ENCODE measurements at regions of chr1 and their contacts with region 1.

Region 1: GRCh38 chr1:26321315-26322041 is 3.7 kb downstream of the CD52 start:
- DNase-seq: peak; percentile 85 to 94 (median 90)
- H3K4me3 ChIP-seq: peak overlapping the region; percentile 93
- H3K4me3 Mint-ChIP-seq: peak overlapping the region; percentile 75 to 99 (median 91)
- H3K27ac ChIP-seq: no peak overlapping the region
- H3K27ac Mint-ChIP-seq: peak overlapping the region; percentile 41 to 100 (median 95)
- H3K4me1 ChIP-seq: peaks cover 46% of the 10 kb centered on the region
- H3K4me1 Mint-ChIP-seq: peaks cover 47 to 63% (median 53%) of the 10 kb centered on the region in 3 donors
- H3K27me3 ChIP-seq: no peaks in the 10 kb centered on the region
- H3K27me3 Mint-ChIP-seq: peaks cover 0 to 2% of the 10 kb centered on the region in 2 donors

Region 2: GRCh38 chr1:26169669-26170471 is 151.6 kb before region 1 on chr1 and contains the start of gene ZNF593:
- CTCF ChIA-PET with region 1: interaction called, 12 read pairs
- POLR2A ChIA-PET with region 1: no interaction called
- DNase-seq: peak; percentile 71 to 88 (median 81)
- H3K4me3 ChIP-seq: peak within 1 kb of the TSS; percentile 68
- H3K4me3 Mint-ChIP-seq: peak within 1 kb of the TSS; percentile 86 to 95 (median 88)
- H3K27ac ChIP-seq: peak within 1 kb of the TSS; percentile 86
- H3K27ac Mint-ChIP-seq: peak within 1 kb of the TSS; percentile 39 to 97 (median 85)
- H3K4me1 ChIP-seq: peaks cover 17% of the 10 kb centered on the region
- H3K4me1 Mint-ChIP-seq: peaks cover 12 to 25% (median 22%) of the 10 kb centered on the region in 3 donors
- H3K27me3 ChIP-seq: no peaks in the 10 kb centered on the region
- H3K27me3 Mint-ChIP-seq: peaks cover 0 to 2% of the 10 kb centered on the region in 2 donors
- total RNA-seq, gene ZNF593: 86.4 to 87.9 TPM

Region 3: DNA sequence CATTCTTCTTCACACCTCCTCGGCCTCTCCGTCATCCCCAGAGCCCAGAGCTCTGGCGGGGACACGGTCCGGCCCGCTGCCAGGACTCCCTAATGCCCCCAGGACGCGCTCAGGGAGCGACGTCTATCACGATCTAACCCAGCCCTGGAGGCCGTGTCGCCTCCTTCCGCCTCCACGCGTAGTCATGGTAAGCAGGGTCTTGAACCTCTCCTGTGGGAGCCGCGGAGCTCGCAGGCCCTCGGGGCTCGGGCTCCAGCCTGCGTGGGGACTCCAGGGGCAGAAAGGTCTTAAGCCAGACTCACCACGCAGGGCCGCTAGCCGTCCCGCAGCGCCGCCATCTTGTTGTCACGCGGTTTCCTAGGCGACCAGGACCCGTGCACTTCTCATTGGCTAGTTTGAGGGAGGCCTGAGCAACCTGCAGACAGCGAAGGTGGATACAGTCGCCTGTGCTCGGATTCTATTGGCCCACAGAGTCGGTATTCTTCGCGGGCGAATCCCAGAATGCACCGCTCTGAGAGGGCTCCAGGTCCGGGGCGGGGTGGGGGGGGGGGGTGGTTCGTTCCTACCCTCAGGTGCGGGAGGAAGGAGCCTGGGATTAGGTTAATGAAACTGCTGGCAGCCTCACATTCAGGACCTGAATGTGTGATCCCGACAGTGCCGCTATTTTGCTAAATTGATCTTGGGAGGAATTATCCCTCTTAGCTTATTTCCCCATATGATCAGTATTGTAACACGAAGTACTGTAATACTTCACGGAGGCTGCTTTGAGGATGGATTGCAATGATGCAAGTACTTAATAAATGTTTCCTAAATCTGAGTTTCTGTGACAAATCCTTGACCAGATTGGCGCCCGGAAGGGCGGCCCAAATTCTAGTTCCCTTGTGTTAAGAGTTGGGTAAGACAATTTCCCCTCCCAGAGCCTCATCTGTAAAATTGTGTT is 14.9 kb before region 1 on chr1 and contains the start of gene UBXN11:
- CTCF ChIA-PET with region 1: interaction called, 51 read pairs
- POLR2A ChIA-PET with region 1: interaction called, 18 read pairs
- DNase-seq: peak; percentile 86 to 96 (median 92)
- H3K4me3 ChIP-seq: peak within 1 kb of the TSS; percentile 86
- H3K4me3 Mint-ChIP-seq: peak within 1 kb of the TSS; percentile 86 to 99 (median 97)
- H3K27ac ChIP-seq: peak within 1 kb of the TSS; percentile 77
- H3K27ac Mint-ChIP-seq: peak within 1 kb of the TSS; percentile 85 to 99 (median 98)
- H3K4me1 ChIP-seq: peaks cover 35% of the 10 kb centered on the region
- H3K4me1 Mint-ChIP-seq: peaks cover 26 to 29% (median 29%) of the 10 kb centered on the region in 3 donors
- H3K27me3 ChIP-seq: no peaks in the 10 kb centered on the region
- H3K27me3 Mint-ChIP-seq: no peaks in the 10 kb centered on the region
- total RNA-seq, gene UBXN11: 35.2 to 35.8 TPM

Region 4: DNA sequence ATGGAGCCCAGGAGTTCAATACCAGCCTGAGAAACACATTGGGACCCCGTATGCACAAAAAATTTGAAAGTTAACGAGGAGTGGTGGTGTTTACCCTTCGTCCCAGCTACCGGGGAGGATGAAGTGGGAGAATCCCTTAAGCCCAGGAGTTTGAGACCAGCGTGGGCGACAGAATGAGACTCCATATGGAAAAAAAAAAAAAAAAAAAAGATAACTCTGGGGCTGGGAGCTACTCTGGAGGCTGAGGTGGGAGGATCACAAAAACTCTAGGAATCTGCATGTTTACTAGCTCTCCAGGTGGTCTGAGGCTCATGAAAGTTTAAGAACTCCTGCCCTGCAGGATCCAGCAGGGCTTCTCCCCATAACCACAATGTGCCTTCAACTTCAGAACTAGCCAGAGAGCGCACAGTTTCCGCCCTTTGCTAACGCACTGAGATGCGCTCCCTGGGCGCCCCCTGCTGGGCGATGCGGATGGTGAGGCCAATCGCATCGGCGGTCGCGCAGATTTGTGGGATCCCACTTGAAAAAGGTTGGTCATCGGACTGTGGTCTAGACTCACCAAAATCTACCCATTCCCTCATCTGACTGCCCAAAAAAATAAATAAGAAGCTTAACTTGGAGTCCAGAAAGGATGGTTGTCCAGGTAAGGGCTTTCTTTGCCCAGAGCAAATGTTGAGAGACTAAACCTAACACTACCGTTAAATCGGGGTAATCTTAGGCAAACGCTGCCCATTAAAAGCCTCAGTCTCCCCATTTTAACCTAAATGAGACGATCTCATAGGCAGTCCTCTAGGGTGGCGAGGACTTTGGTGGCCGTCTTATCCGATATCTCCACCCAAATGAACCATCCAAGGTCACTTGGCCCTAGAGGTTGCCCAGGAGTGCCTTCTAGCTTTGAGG is 42.3 kb after region 1 on chr1:
- CTCF ChIA-PET with region 1: interaction called, 14 read pairs
- POLR2A ChIA-PET with region 1: interaction called, 6 read pairs
- DNase-seq: peak; percentile 75 to 87 (median 78)
- H3K4me3 ChIP-seq: no peak overlapping the region
- H3K4me3 Mint-ChIP-seq: peak overlapping the region in 5 of 7 donors; percentile 4 to 72 (median 61)
- H3K27ac ChIP-seq: no peak overlapping the region
- H3K27ac Mint-ChIP-seq: peak overlapping the region in 5 of 8 donors; percentile 18 to 59 (median 32)
- H3K4me1 ChIP-seq: peaks cover 46% of the 10 kb centered on the region
- H3K4me1 Mint-ChIP-seq: peaks cover 60 to 84% (median 66%) of the 10 kb centered on the region in 3 donors
- H3K27me3 ChIP-seq: peaks cover 14% of the 10 kb centered on the region
- H3K27me3 Mint-ChIP-seq: peaks cover 11 to 25% of the 10 kb centered on the region in 2 donors

Region 5: DNA sequence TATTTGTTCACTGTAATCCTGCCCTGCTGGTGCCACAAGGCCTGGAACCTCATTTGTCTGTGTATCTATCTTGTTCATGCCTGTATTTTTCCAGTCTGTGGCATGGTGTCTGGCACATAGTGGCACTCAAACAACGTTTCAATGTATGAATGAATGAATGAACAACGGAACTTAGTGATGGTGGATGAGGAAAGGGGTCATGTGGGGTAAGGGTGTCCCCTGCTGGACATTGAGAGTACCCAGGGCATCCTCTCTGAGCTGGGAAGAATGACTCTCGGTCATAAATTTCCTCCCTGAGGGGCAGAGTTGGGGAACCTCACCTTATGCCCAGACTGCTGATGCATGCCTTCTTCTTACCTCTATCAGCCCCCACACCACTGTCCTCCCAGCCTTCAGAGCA is 70.0 kb after region 1 on chr1:
- CTCF ChIA-PET with region 1: interaction called, 14 read pairs
- POLR2A ChIA-PET with region 1: interaction called, 6 read pairs
- DNase-seq: peak in 4 of 5 donors; percentile 24 to 73 (median 46)
- H3K4me3 ChIP-seq: no peak overlapping the region
- H3K4me3 Mint-ChIP-seq: peak overlapping the region in 3 of 7 donors; percentile 0 to 22 (median 18)
- H3K27ac ChIP-seq: no peak overlapping the region
- H3K27ac Mint-ChIP-seq: peak overlapping the region in 4 of 8 donors; percentile 1 to 15 (median 4)
- H3K4me1 ChIP-seq: peaks cover 10% of the 10 kb centered on the region
- H3K4me1 Mint-ChIP-seq: peaks cover 32 to 45% (median 35%) of the 10 kb centered on the region in 3 donors
- H3K27me3 ChIP-seq: no peaks in the 10 kb centered on the region
- H3K27me3 Mint-ChIP-seq: peaks cover 0 to 9% of the 10 kb centered on the region in 2 donors